ENCODE measurements at regions of chr6 and their contacts with region 1.

Region 1: GRCh38 chr6:126020305-126021050 is 34.1 kb downstream of the TRMT11 start:
- DNase-seq: no peak
- ATAC-seq: no peak
- H3K4me3 ChIP-seq: no peak overlapping the region
- H3K27ac ChIP-seq: no peak overlapping the region
- H3K4me1 ChIP-seq: no peaks in the 10 kb centered on the region
- H3K27me3 ChIP-seq: no peaks in the 10 kb centered on the region
- CTCF ChIP-seq: no peak

Region 2: GRCh38 chr6:125984311-125984710 is 36.2 kb before region 1 on chr6:
- CTCF ChIA-PET with region 1: no interaction called
- POLR2A ChIA-PET with region 1: interaction called, 13 read pairs
- in situ Hi-C with region 1: no loop called
- intact Hi-C with region 1: no loop called
- DNase-seq: no peak
- ATAC-seq: no peak
- H3K4me3 ChIP-seq: no peak overlapping the region
- H3K27ac ChIP-seq: no peak overlapping the region
- H3K4me1 ChIP-seq: peaks cover 29% of the 10 kb centered on the region
- H3K27me3 ChIP-seq: no peaks in the 10 kb centered on the region
- CTCF ChIP-seq: no peak

Measured in Panc1 (cell line).